SK-N-SH (cell line): ENCODE measurements at regions of chr3 and their contacts with region 1.

Region 1: DNA sequence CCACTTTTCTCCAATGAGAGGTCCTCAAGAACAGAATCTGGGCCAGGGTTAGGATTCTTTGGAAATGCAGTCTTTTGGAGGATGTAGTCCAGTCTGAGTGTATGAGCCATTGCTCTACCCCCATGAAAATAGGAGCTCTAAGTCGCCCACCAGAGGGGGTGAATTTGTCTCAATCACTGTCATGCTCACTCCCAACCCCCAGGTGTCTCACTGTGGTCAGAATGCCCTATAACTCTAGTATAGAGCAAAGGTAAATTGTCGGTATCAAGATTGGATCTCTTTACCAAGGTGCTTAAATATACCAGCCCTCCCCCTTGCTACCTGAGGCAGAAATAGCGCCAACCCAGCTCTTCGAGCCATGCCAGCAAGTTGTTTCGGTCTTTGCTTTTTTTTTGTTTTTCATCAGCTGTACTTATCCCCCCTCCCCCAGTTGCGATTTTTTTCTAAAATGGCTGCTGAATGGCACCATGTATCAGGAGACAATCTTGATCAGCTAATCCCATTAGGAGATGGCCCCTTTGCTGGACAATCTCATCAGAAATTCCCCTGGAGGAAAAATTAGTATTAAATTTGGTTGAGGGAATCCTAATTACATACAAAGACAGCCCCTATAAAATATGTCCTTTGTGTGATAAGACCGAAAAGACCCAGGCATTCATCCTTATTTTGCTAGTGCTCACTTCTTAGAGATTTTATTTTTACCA is 130.7 kb downstream of the EBLN2 start:
- DNase-seq: peak; percentile 61
- H3K4me3 ChIP-seq: no peak overlapping the region; a peak in 2 of 4 replicates
- H3K27ac ChIP-seq: peak overlapping the region in 1 of 2 experiments; percentile 91; a peak in 2 of 4 replicates
- H3K4me1 ChIP-seq: peaks cover 0 to 8% of the 10 kb centered on the region in 2 experiments; a peak in 2 of 4 replicates
- H3K27me3 ChIP-seq: no peaks in the 10 kb centered on the region
- CTCF ChIP-seq: peak; percentile 38; the same call in 1 of the 2 replicates
- EP300 ChIP-seq: peak in 1 of 2 experiments; percentile 96; a peak in 2 of 4 replicates
- RAD21 ChIP-seq: peak; percentile 64

Region 2: GRCh38 chr3:73179601-73180000 is 12.6 kb before region 1 on chr3:
- CTCF ChIA-PET with region 1: interaction called, 20 read pairs
- POLR2A ChIA-PET with region 1: no interaction called
- DNase-seq: no peak
- H3K4me3 ChIP-seq: no peak overlapping the region
- H3K27ac ChIP-seq: no peak overlapping the region
- H3K4me1 ChIP-seq: no peaks in the 10 kb centered on the region; a peak in 1 of 4 replicates
- H3K27me3 ChIP-seq: no peaks in the 10 kb centered on the region; the same call in 1 of the 2 replicates
- CTCF ChIP-seq: no peak
- EP300 ChIP-seq: no peak
- RAD21 ChIP-seq: no peak